Panc1 (cell line): ENCODE measurements at regions of chr20 and their contacts with region 1.

Region 1: DNA sequence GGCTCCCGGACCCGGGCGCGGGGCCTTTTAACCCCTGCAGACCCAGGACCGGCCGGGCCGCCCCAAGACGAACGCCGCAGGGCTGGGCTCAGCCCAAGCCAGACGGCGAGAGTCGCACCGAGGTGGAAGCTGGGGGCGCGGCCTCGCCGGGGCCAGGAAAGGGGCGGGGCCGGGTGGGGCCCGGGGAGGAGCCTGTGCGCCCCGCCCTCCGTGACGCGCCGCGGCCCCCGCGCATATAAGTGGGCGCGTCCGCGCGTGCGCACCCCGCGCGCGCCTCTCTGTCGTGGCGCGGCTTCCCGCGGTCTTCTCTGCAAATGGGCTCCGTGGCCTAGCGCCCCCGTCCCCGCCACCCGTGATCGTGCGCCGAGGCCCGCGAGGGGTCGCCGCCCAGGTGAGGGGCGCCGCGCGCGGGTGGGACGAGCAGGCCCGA is at the start of gene PPDPF:
- DNase-seq: no peak
- ATAC-seq: peak; percentile 86
- H3K4me3 ChIP-seq: peak within 1 kb of the TSS; percentile 79 to 80
- H3K27ac ChIP-seq: peak within 1 kb of the TSS; percentile 80
- H3K4me1 ChIP-seq: peaks cover 7% of the 10 kb centered on the region
- H3K27me3 ChIP-seq: no peaks in the 10 kb centered on the region
- CTCF ChIP-seq: no peak
- total RNA-seq, gene PPDPF: 241 TPM

Region 2: GRCh38 chr20:63425846-63426485 is 94.6 kb before region 1 on chr20:
- CTCF ChIA-PET with region 1: no interaction called
- POLR2A ChIA-PET with region 1: no interaction called
- in situ Hi-C with region 1: no loop called
- intact Hi-C with region 1: no loop called
- DNase-seq: no peak
- ATAC-seq: no peak
- H3K4me3 ChIP-seq: no peak overlapping the region
- H3K27ac ChIP-seq: no peak overlapping the region
- H3K4me1 ChIP-seq: no peaks in the 10 kb centered on the region
- H3K27me3 ChIP-seq: no peaks in the 10 kb centered on the region
- CTCF ChIP-seq: no peak

Region 3: GRCh38 chr20:63973636-63974402 is 453.3 kb after region 1 on chr20:
- CTCF ChIA-PET with region 1: no interaction called
- POLR2A ChIA-PET with region 1: interaction called, 12 read pairs
- in situ Hi-C with region 1: no loop called
- intact Hi-C with region 1: no loop called
- DNase-seq: no peak
- ATAC-seq: peak; percentile 81
- H3K4me3 ChIP-seq: peak overlapping the region; percentile 39 to 55
- H3K27ac ChIP-seq: peak overlapping the region; percentile 72
- H3K4me1 ChIP-seq: peaks cover 38% of the 10 kb centered on the region
- H3K27me3 ChIP-seq: no peaks in the 10 kb centered on the region
- CTCF ChIP-seq: peak; percentile 100

Region 4: GRCh38 chr20:64001607-64002011 is 481.1 kb after region 1 on chr20:
- CTCF ChIA-PET with region 1: no interaction called
- POLR2A ChIA-PET with region 1: no interaction called
- in situ Hi-C with region 1: no loop called
- intact Hi-C with region 1: no loop called
- DNase-seq: no peak
- ATAC-seq: peak; percentile 49
- H3K4me3 ChIP-seq: no peak overlapping the region
- H3K27ac ChIP-seq: no peak overlapping the region
- H3K4me1 ChIP-seq: no peaks in the 10 kb centered on the region
- H3K27me3 ChIP-seq: no peaks in the 10 kb centered on the region
- CTCF ChIP-seq: no peak